ENCODE measurements at regions of chr12 and their contacts with region 1.

Region 1: GRCh38 chr12:51823875-51824565 is 24.5 kb downstream of the FIGNL2 start:
- DNase-seq: peak in 6 of 10 donors; percentile 35 to 91 (median 40)

Region 2: DNA sequence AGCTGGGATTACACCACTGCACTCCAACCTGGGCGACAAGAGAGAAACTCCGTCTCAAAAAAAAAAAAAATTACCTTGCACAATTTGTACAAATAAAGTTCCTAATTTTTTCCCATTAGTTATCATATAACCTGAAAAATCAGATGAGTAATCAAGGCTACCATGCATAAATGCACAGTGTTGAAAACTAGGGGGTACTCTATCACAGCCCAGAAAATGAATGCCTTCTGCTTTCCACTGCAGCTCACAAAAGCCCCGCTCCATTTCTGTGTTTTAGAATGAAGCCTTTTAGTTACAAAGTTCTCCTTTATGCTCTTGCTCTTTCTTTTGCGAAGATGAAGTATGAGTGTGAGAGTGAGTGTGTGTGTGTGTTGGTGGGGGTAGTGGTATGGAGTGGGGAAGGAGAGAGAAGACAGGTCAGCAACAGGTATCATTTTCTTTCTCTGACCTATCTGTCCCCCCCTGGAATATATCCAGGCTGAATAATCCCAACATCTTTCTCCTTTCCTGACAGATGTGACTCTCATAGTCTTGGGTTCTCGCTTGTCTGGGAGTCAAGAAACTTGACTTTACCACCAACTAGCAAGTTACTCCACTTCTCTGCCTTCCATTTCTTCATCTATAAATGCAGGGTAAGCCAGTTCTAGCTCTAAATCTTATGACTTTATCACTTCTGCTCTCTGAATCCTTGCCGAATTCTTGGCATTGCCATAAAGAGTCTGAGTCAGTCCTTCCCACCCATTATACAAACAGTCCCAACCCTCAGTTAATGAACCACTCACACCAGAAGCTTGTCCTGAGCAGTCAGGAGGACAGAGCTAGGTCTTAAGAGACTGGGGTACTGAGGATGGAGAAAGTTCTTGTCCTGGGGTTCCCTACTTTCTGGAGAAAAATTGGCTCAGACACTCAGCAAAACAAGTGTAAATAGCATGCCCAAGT is 516.1 kb before region 1 on chr12:
- intact Hi-C with region 1: no loop called
- DNase-seq: no peak

Region 3: GRCh38 chr12:51590347-51591019 is 233.5 kb before region 1 on chr12:
- intact Hi-C with region 1: loop called (anchors 5 kb)
- DNase-seq: peak; percentile 37 to 95 (median 73)